ENCODE measurements at regions of chr3 and their contacts with region 1.

Region 1: DNA sequence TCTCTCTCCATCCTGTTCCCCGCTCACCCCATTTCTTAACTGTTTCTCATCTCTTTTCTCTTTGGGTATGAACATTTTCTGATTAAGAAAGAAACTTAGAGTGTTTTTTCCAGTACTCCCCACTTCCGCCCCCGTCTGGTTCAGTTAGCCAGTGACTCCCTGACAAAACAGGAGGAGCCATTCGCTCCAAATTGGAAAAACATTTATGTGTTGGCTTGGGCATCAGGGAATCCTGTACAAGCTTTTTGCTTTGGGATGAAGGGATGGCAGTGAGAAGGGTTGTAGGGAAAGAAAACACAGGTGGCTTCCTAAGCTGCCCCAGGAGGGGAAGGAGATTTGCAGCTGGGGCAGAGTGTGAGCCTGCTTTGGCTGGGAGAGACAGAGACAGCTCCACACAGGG is 47.0 kb downstream of the BOC start:
- DNase-seq: no peak
- H3K4me3 Mint-ChIP-seq: no peak overlapping the region
- H3K27ac Mint-ChIP-seq: peak overlapping the region; percentile 38
- H3K4me1 Mint-ChIP-seq: peaks cover 10% of the 10 kb centered on the region
- H3K27me3 Mint-ChIP-seq: no peaks in the 10 kb centered on the region

Region 2: GRCh38 chr3:113241292-113242095 is 16.9 kb before region 1 on chr3:
- intact Hi-C with region 1: loop called (anchors 2 kb)
- DNase-seq: no peak
- H3K4me3 Mint-ChIP-seq: no peak overlapping the region
- H3K27ac Mint-ChIP-seq: peak overlapping the region; percentile 59
- H3K4me1 Mint-ChIP-seq: peaks cover 15% of the 10 kb centered on the region
- H3K27me3 Mint-ChIP-seq: peaks cover 2% of the 10 kb centered on the region